Activated B cell treated with CpG ODN at 0.5 μM for 24 hours (primary cell): ENCODE measurements at regions of chr1 and their contacts with region 1.

Region 1: DNA sequence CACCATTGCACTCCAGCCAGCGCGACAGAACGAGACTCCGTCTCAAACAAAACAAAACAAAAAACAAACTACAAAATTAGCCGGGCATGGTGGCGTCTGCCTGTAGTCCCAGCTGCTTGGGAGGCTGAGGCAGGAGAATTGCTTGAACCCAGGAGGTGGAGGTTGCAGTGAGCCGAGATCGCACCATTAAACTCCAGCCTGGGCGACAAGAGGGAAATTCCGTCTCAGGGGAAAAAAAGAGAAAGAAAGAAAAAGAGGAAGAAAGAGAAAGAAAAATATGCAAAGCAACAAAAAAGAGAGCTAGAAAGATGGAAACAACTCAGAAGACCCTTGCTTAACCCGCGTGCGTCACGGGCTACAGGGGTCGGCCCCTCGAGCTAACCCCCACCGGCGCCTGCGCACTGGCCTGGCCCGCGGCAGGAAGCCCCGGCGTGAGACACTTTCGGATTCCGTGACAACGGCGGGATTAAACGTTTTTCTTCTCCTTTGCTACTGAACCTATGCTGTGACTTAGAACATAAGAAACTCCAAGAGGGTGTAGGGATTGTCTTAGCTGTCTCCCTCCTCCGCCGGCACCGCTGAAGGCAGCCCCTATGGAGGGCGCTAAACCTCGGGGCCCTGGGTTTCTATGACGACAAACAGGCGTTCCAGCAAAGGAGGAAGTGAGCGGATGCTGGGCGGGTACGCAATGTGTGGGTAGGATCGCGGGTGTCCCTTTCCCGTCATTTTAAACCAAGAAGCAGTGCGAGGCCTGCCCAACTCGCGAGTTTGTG is at the start of gene AXDND1:
- DNase-seq: peak; percentile 83
- ATAC-seq: peak; percentile 91
- H3K4me3 Mint-ChIP-seq: peak within 1 kb of the TSS; percentile 98
- H3K27ac Mint-ChIP-seq: peak within 1 kb of the TSS; percentile 100
- H3K4me1 Mint-ChIP-seq: peaks cover 11% of the 10 kb centered on the region
- H3K27me3 Mint-ChIP-seq: no peaks in the 10 kb centered on the region
- CTCF ChIP-seq: no peak
- total RNA-seq, gene AXDND1: 0.61 and 0.75 TPM in 2 replicates

Region 2: DNA sequence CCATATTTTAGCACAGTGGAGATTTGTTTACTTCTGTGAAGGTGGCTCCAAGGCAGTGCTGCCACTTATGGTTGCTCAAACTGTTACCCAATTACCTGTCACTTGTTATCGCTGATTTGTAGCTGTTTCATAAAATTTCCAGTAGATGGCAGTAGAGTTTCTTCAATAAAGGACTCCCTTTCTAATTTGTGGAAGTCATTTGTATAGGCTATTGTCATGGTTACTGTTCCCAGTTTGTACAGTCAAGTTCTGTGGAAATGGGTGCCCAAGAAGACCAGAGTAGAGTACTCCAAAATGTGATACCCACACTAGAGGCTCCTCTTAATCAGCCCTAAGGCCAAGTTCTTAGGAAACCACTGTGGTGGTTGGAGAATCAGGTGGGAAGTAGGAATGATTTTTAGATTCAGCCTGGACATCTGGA is 1054.8 kb before region 1 on chr1:
- CTCF ChIA-PET with region 1: interaction called, 5 read pairs
- POLR2A ChIA-PET with region 1: no interaction called
- intact Hi-C with region 1: loop called (anchors 2 kb)
- DNase-seq: no peak
- ATAC-seq: peak; percentile 47
- H3K4me3 Mint-ChIP-seq: no peak overlapping the region
- H3K27ac Mint-ChIP-seq: no peak overlapping the region
- H3K4me1 Mint-ChIP-seq: no peaks in the 10 kb centered on the region
- H3K27me3 Mint-ChIP-seq: peaks cover 3% of the 10 kb centered on the region
- CTCF ChIP-seq: peak; percentile 74

Region 3: DNA sequence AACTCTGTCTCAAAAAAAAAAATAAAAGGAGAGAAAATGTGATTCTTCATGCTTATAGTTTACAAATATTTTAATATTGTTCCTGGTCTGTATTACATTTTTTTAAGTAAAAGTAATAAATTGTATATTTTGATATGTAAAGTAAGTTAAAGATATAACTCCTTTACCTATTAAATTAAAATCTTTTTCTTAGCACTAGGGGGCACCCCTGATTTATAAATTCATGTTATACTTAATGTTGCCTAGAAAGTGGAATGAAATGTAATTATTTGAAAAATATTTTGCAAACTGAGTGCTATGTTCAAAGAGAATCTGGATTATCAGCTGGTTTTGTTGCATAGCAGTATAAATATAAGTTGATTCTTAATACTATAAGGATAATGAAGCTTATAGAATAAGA is 591.2 kb before region 1 on chr1:
- CTCF ChIA-PET with region 1: no interaction called
- POLR2A ChIA-PET with region 1: no interaction called
- intact Hi-C with region 1: loop called (anchors 10 kb)
- DNase-seq: no peak
- ATAC-seq: peak; percentile 54
- H3K4me3 Mint-ChIP-seq: no peak overlapping the region
- H3K27ac Mint-ChIP-seq: peak overlapping the region; percentile 61
- H3K4me1 Mint-ChIP-seq: peaks cover 59% of the 10 kb centered on the region
- H3K27me3 Mint-ChIP-seq: no peaks in the 10 kb centered on the region
- CTCF ChIP-seq: no peak

Region 4: DNA sequence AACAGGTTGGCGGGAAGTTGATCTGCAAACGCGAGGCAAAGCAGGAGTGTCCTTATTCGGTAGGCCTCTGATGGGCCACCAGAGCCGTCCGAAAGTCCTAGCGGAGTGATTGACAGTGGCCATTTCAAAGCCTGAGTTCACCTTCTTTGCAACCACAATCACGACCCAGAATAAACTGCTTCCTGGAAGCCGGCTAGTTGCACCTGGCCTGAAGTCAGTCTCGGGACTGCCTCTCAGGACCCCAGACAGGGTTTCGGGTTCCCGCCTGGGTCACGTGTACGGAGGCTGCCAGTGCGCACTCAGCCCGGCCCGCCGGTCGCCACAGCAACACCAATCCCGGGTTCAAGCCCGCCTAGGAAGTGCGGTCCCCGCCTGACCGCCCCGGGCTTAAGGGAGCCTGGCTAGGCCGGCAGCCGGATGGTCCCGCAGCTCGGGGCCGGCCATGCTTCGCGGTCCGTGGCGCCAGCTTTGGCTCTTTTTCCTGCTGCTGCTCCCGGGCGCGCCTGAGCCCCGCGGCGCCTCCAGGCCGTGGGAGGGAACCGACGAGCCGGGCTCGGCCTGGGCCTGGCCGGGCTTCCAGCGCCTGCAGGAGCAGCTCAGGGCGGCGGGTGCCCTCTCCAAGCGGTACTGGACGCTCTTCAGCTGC is 283.7 kb before region 1 on chr1 and contains the start of gene TOR3A:
- CTCF ChIA-PET with region 1: interaction called, 30 read pairs
- POLR2A ChIA-PET with region 1: interaction called, 21 read pairs
- intact Hi-C with region 1: loop called (anchors 1 kb)
- DNase-seq: peak; percentile 82
- ATAC-seq: peak; percentile 79
- H3K4me3 Mint-ChIP-seq: peak within 1 kb of the TSS; percentile 98
- H3K27ac Mint-ChIP-seq: peak within 1 kb of the TSS; percentile 96
- H3K4me1 Mint-ChIP-seq: peaks cover 44% of the 10 kb centered on the region
- H3K27me3 Mint-ChIP-seq: no peaks in the 10 kb centered on the region
- CTCF ChIP-seq: no peak
- total RNA-seq, gene TOR3A: 59.5 and 60.8 TPM in 2 replicates

Region 5: DNA sequence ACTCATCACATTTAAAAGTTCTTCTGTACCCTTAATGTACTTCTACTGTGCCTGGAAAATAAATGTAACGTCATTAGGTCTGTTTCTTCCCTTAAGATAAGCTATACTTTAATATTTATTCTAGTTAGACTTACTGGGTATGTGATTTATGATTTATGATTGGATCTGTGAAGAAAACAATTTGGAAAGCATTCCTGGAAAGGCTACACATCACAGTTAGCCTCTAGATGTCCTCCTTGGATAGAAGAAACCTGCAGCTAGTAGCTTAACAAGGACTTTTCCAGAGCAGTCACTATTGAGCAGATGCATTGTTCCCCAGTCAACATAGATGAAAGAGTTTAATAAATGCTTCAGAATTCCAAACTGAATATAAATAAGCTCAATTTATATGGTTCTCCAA is 113.8 kb before region 1 on chr1:
- CTCF ChIA-PET with region 1: interaction called, 3 read pairs
- POLR2A ChIA-PET with region 1: interaction called, 5 read pairs
- intact Hi-C with region 1: loop called (anchors 1 kb)
- DNase-seq: no peak
- ATAC-seq: no peak
- H3K4me3 Mint-ChIP-seq: no peak overlapping the region
- H3K27ac Mint-ChIP-seq: no peak overlapping the region
- H3K4me1 Mint-ChIP-seq: no peaks in the 10 kb centered on the region
- H3K27me3 Mint-ChIP-seq: no peaks in the 10 kb centered on the region
- CTCF ChIP-seq: no peak

Region 6: DNA sequence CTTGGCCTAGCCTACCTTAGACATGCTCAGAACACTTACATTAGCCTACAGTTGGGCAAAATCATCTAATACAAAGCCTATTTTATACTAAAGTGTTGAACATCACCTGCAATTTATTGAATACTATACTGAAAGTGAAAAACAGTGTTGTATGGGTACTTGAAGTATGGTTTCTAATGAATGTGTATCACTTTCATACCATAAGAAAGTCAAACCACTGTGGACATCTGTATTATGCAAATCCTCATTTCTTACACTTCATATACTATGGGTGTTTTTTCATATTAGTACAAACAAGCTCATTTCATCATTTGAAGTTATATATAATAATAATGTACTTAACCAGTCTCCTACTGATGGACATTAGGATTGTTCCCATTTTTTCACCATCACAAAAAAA is 267.4 kb after region 1 on chr1:
- CTCF ChIA-PET with region 1: no interaction called
- POLR2A ChIA-PET with region 1: no interaction called
- intact Hi-C with region 1: no loop called
- DNase-seq: no peak
- ATAC-seq: no peak
- H3K4me3 Mint-ChIP-seq: no peak overlapping the region
- H3K27ac Mint-ChIP-seq: no peak overlapping the region
- H3K4me1 Mint-ChIP-seq: no peaks in the 10 kb centered on the region
- H3K27me3 Mint-ChIP-seq: peaks cover 3% of the 10 kb centered on the region
- CTCF ChIP-seq: no peak

Region 7: DNA sequence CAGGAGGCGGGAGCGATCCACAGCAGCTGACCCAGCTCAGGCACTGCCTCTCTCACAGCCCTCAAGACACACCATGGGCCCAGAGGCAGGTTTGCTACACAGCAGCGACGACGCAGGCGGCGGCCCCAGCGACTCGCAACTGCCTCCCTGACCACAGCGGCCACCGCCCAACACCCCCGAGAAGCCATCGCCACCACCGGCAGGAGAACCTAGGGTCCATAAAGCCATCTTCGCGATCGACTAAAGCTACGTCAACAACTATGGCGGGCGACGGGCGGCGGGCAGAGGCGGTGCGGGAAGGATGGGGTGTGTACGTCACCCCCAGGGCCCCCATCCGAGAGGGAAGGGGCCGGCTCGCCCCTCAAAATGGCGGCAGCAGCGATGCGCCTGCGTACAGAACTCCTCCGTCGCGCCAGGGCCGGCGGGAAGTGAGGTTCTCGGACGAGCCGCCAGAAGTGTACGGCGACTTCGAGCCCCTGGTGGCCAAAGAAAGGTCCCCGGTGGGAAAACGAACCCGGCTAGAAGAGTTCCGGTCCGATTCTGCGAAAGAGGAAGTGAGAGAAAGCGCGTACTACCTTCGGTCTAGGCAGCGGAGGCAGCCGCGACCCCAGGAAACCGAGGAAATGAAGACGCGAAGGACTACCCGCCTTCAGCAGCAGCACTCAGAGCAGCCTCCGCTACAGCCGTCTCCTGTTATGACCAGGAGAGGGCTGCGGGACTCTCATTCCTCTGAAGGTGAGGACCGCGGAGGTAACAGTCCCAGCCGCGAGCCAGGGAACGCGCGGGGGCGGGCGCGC is 516.9 kb after region 1 on chr1 and contains the start of gene TOR1AIP1:
- CTCF ChIA-PET with region 1: no interaction called
- POLR2A ChIA-PET with region 1: no interaction called
- intact Hi-C with region 1: loop called (anchors 1 kb)
- DNase-seq: peak; percentile 96
- ATAC-seq: peak; percentile 76
- H3K4me3 Mint-ChIP-seq: peak within 1 kb of the TSS; percentile 100
- H3K27ac Mint-ChIP-seq: peak within 1 kb of the TSS; percentile 100
- H3K4me1 Mint-ChIP-seq: peaks cover 64% of the 10 kb centered on the region
- H3K27me3 Mint-ChIP-seq: no peaks in the 10 kb centered on the region
- CTCF ChIP-seq: no peak
- total RNA-seq, gene TOR1AIP1: 42.3 and 46.6 TPM in 2 replicates

Region 8: DNA sequence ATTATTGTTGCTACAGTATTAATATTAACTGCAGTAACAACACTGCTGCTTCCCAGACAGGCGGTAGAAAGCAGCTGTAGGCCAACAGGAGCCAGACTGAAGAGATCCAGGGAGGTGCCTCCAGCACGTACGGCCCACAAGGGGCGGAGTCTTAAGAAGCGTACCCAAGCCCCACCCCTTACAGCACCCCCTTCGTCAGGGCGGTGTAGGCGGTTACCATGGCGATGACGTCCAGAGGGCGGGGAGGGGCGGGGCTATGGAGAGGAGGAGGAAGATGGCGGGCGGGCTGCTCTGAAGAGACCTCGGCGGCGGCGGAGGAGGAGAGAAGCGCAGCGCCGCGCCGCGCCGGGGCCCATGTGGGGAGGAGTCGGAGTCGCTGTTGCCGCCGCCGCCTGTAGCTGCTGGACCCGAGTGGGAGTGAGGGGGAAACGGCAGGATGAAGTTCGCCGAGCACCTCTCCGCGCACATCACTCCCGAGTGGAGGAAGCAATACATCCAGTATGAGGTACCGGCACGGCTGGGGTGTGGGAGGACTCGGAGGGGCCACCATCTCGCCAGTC is 1266.3 kb after region 1 on chr1 and contains the start of gene XPR1:
- CTCF ChIA-PET with region 1: no interaction called
- POLR2A ChIA-PET with region 1: no interaction called
- intact Hi-C with region 1: loop called (anchors 10 kb)
- DNase-seq: peak; percentile 84
- ATAC-seq: peak; percentile 95
- H3K4me3 Mint-ChIP-seq: peak within 1 kb of the TSS; percentile 35
- H3K27ac Mint-ChIP-seq: peak within 1 kb of the TSS; percentile 88
- H3K4me1 Mint-ChIP-seq: peaks cover 17% of the 10 kb centered on the region
- H3K27me3 Mint-ChIP-seq: peaks cover 5% of the 10 kb centered on the region
- CTCF ChIP-seq: no peak
- total RNA-seq, gene XPR1: 17.1 and 20.4 TPM in 2 replicates